ENCODE measurements at regions of chr20 and their contacts with region 1.

Region 1: DNA sequence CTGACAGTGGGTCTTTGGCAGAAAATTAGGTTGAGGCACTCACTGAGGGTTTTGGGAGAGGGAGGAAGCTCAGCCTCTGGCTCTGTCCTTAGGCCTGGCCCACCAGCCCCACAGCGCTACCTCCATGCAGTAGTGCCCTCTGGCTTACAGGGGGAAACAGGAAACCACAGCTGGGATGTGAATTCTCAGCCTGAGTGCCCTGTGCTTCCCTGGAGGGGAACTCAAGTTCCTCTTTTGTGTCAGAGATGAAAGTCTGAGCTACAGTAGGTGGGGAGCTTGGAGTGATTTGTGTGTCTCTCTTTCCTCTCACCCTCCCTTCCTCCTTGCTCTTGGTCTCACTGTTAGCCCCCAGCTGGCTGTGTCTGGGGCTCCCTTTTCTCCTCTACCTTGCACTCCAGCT is 48.2 kb upstream of the BLCAP start:
- DNase-seq: no peak
- H3K4me3 ChIP-seq: no peak overlapping the region
- H3K27ac ChIP-seq: no peak overlapping the region
- H3K4me1 ChIP-seq: no peaks in the 10 kb centered on the region
- H3K27me3 ChIP-seq: no peaks in the 10 kb centered on the region
- CTCF ChIP-seq: no peak
- POLR2A ChIP-seq: no peak

Region 2: GRCh38 chr20:36676701-36677421 is 899.0 kb before region 1 on chr20:
- CTCF ChIA-PET with region 1: no interaction called
- POLR2A ChIA-PET with region 1: no interaction called
- dilution Hi-C with region 1: no loop called
- intact Hi-C with region 1: loop called (anchors 10 kb)
- DNase-seq: no peak
- H3K4me3 ChIP-seq: no peak overlapping the region
- H3K27ac ChIP-seq: no peak overlapping the region
- H3K4me1 ChIP-seq: no peaks in the 10 kb centered on the region
- H3K27me3 ChIP-seq: no peaks in the 10 kb centered on the region
- CTCF ChIP-seq: no peak
- POLR2A ChIP-seq: no peak

Region 3: DNA sequence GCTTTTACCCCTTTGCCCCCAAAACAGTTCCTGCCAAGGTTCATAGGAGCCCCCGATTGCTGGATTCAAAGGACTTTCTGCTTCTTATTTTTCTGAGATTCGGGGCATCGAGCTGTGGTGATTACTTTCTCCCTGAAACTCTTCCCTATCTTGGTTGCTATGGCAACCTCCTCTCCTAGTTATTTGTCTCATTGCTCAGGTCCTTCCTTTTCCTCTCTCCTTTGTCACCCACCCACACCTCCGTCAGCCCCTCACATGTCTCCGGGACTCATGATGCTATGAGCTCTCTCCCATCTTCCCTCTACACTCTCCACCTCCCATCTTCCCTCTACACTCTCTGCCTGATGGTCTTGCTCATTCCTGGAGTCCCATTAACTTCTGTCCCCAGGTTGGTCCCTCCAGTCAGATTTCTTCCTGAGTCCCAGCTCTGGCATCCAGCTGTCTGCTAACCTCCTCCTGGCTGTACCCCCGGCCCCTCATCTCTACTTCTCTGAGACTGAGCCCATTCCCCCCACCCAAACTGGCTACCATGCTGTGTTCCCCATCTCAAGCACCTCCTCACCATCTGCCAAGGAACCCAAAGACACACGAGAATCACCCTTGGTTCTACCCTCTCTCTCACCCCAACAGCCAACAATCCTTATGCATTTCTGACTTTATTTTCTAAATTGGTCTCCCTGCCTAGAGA is 85.1 kb before region 1 on chr20:
- CTCF ChIA-PET with region 1: no interaction called
- POLR2A ChIA-PET with region 1: no interaction called
- dilution Hi-C with region 1: no loop called
- intact Hi-C with region 1: no loop called
- DNase-seq: no peak
- H3K4me3 ChIP-seq: no peak overlapping the region
- H3K27ac ChIP-seq: no peak overlapping the region
- H3K4me1 ChIP-seq: no peaks in the 10 kb centered on the region
- H3K27me3 ChIP-seq: peaks cover 0 to 1% of the 10 kb centered on the region in 2 experiments
- CTCF ChIP-seq: no peak
- POLR2A ChIP-seq: no peak

Region 4: DNA sequence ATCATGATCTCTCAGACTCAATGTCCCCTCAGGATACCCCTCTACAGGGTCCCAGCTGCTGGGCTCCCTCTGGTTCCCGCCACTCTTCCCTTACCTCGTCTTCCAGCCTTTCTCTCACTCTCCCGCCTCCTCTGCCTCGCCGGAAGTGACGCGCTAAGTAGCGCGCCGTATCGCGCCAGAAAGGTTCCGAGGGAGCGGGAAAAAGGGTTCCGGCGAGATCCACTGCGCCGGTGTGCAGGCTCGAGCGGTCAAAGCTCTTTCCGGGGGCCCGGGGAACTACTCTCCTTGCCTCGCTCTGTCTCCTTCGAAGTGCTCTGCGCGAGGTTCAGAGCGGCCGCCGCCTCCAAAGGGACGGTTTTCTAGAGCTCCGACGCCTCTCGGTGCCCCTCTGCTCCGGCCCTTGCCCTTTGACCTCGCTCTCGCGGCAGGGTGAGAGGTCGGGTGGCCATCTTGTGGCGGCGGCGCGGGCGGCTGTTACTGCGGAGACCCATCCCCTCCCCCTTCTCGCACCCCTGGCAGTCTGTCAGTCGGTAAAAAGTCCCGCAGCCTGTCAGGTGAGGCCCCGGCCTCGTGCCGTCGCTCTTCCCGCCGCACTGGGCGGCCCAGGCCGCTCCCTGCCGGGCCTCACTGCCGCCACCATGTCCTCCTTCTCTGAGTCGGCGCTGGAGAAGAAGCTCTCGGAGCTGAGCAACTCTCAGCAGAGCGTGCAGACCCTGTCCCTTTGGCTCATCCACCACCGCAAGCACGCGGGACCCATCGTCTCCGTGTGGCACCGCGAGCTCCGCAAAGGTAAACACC is 457.6 kb after region 1 on chr20 and contains the starts of genes RPRD1B and TTI1:
- CTCF ChIA-PET with region 1: no interaction called
- POLR2A ChIA-PET with region 1: no interaction called
- dilution Hi-C with region 1: no loop called
- intact Hi-C with region 1: no loop called
- DNase-seq: peak; percentile 92
- H3K4me3 ChIP-seq: peak within 1 kb of the TSS; percentile 39 to 74 (median 64)
- H3K27ac ChIP-seq: peak within 1 kb of the TSS; percentile 75
- H3K4me1 ChIP-seq: peaks cover 31% of the 10 kb centered on the region
- H3K27me3 ChIP-seq: no peaks in the 10 kb centered on the region
- CTCF ChIP-seq: no peak
- POLR2A ChIP-seq: peak; percentile 78
- total RNA-seq, gene RPRD1B: 24.5 and 29.3 TPM in 2 replicates
- total RNA-seq, gene TTI1: 21.4 and 23.2 TPM in 2 replicates

Measured in endothelial cell of umbilical vein (primary cell).